ENCODE measurements at regions of chr18 and their contacts with region 1.

Region 1: DNA sequence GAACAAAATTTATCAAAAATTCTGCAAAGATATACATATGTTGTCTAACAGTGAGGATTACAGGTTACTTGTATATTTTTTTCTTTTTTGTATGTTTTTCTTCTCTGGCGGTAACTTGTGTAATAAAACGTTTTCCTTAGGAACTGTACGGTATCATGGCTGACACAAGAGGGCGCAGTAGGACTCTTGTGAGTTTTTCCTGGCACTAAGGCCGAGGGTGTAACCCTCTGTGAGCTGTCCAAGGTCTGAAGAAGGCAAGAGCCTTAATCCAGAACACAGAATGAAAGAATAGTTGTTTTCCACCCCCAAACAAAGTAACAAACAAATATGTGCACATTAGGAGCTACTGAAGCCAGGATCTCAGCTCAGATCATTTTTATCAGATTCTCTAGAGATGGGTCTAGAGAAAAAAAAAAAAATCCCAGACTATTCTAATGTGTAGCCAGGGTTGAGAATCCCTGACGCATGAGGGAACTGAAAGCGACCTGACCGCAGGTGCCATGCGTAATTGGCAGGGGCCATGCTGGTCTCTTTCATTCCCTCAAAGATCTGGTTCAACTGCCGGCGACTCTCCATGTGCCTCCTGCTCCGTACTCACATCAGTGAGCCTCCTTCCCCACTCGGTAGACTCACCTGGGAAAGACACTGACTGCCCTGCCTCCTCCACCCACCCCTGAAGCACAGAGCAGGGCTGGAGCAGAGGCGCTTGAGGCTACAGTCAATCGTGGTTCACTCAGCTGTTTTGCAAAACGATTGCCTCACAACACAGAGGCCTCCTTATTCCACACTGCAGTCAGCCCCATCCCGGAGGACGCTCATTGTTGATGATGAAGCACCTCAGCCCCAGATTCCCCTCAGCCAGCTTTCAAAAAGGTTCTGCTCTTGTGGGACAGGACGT is 26.9 kb downstream of the TMEM200C start:
- DNase-seq: peak; percentile 77 to 78
- H3K4me3 ChIP-seq: no peak overlapping the region
- H3K4me3 Mint-ChIP-seq: no peak overlapping the region
- H3K27ac Mint-ChIP-seq: no peak overlapping the region
- H3K4me1 ChIP-seq: no peaks in the 10 kb centered on the region
- H3K4me1 Mint-ChIP-seq: no peaks in the 10 kb centered on the region
- H3K27me3 ChIP-seq: no peaks in the 10 kb centered on the region
- H3K27me3 Mint-ChIP-seq: no peaks in the 10 kb centered on the region
- CTCF ChIP-seq: peak; percentile 70 to 76

Region 2: GRCh38 chr18:6219116-6219717 is 350.8 kb after region 1 on chr18:
- CTCF ChIA-PET with region 1: no interaction called
- POLR2A ChIA-PET with region 1: no interaction called
- intact Hi-C with region 1: loop called (anchors 1 kb)
- DNase-seq: peak; percentile 44 to 65
- H3K4me3 ChIP-seq: no peak overlapping the region
- H3K4me3 Mint-ChIP-seq: no peak overlapping the region
- H3K27ac Mint-ChIP-seq: no peak overlapping the region
- H3K4me1 ChIP-seq: no peaks in the 10 kb centered on the region
- H3K4me1 Mint-ChIP-seq: no peaks in the 10 kb centered on the region
- H3K27me3 ChIP-seq: no peaks in the 10 kb centered on the region
- H3K27me3 Mint-ChIP-seq: peaks cover 2% of the 10 kb centered on the region
- CTCF ChIP-seq: peak; percentile 65 to 91

Region 3: GRCh38 chr18:6401687-6402086 is 533.2 kb after region 1 on chr18:
- CTCF ChIA-PET with region 1: interaction called, 3 read pairs
- POLR2A ChIA-PET with region 1: no interaction called
- intact Hi-C with region 1: loop called (anchors 1 kb)
- DNase-seq: peak in 1 of 2 experiments; percentile 23
- H3K4me3 ChIP-seq: no peak overlapping the region
- H3K4me3 Mint-ChIP-seq: no peak overlapping the region
- H3K27ac Mint-ChIP-seq: no peak overlapping the region
- H3K4me1 ChIP-seq: no peaks in the 10 kb centered on the region; the same call in 1 of the 2 replicates
- H3K4me1 Mint-ChIP-seq: no peaks in the 10 kb centered on the region
- H3K27me3 ChIP-seq: no peaks in the 10 kb centered on the region
- H3K27me3 Mint-ChIP-seq: peaks cover 7% of the 10 kb centered on the region
- CTCF ChIP-seq: peak in 1 of 2 experiments; percentile 41

Region 4: GRCh38 chr18:6521795-6522418 is 653.4 kb after region 1 on chr18:
- CTCF ChIA-PET with region 1: no interaction called
- POLR2A ChIA-PET with region 1: no interaction called
- intact Hi-C with region 1: loop called (anchors 1 kb)
- DNase-seq: peak; percentile 45 to 71
- H3K4me3 ChIP-seq: no peak overlapping the region
- H3K4me3 Mint-ChIP-seq: no peak overlapping the region
- H3K27ac Mint-ChIP-seq: no peak overlapping the region
- H3K4me1 ChIP-seq: no peaks in the 10 kb centered on the region
- H3K4me1 Mint-ChIP-seq: no peaks in the 10 kb centered on the region
- H3K27me3 ChIP-seq: no peaks in the 10 kb centered on the region
- H3K27me3 Mint-ChIP-seq: peaks cover 6% of the 10 kb centered on the region
- CTCF ChIP-seq: peak; percentile 80 to 82

Measured in Caco-2 (cell line).